ENCODE measurements at regions of chr6 and their contacts with region 1.

Region 1: DNA sequence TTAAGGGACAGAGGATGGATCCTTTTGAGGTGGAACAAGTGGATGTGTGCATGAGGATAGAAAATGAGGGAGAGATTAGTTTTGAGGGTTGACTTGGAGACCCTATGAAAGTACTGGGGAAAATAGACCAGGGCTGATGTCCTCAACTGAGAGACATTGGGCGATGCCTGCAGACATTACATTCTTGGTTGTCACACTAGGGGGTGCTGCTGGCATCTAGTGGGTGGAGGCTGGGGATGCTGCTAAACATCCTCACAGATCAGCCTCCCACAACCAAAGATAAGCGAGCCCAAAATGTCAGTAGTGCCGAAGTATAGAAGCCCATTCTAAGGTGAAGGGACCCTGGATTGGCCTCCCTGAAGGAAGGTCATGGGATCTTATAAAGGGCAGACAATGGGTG is 63.3 kb downstream of the MOCS1 start:
- DNase-seq: no peak
- ATAC-seq: no peak
- H3K4me3 ChIP-seq: no peak overlapping the region
- H3K27ac ChIP-seq: no peak overlapping the region
- H3K4me1 ChIP-seq: no peaks in the 10 kb centered on the region
- H3K27me3 ChIP-seq: no peaks in the 10 kb centered on the region
- CTCF ChIP-seq: no peak

Region 2: GRCh38 chr6:40295251-40295949 is 424.4 kb after region 1 on chr6:
- intact Hi-C with region 1: loop called in 1 of 10 experiments (anchors 5 kb)
- DNase-seq: no peak
- ATAC-seq: no peak
- H3K4me3 ChIP-seq: no peak overlapping the region
- H3K27ac ChIP-seq: no peak overlapping the region
- H3K4me1 ChIP-seq: no peaks in the 10 kb centered on the region
- H3K27me3 ChIP-seq: peaks cover 0 to 55% (median 15%) of the 10 kb centered on the region in 7 donors
- CTCF ChIP-seq: no peak

Measured in heart right ventricle (tissue), 16 donors.